HEK293 (cell line): ENCODE measurements at regions of chr7 and their contacts with region 1.

Region 1: GRCh38 chr7:143240291-143241168 is 18.7 kb downstream of the TAS2R40 start:
- H3K4me3 ChIP-seq: no peak overlapping the region
- H3K27ac ChIP-seq: no peak overlapping the region
- H3K4me1 ChIP-seq: no peaks in the 10 kb centered on the region
- CTCF ChIP-seq: peak; percentile 39; the same call in 1 of the 2 replicates

Region 2: GRCh38 chr7:143027683-143028082 is 212.8 kb before region 1 on chr7:
- CTCF ChIA-PET with region 1: no interaction called
- POLR2A ChIA-PET with region 1: no interaction called
- H3K4me3 ChIP-seq: no peak overlapping the region
- H3K27ac ChIP-seq: no peak overlapping the region
- H3K4me1 ChIP-seq: no peaks in the 10 kb centered on the region
- CTCF ChIP-seq: no peak

Region 3: DNA sequence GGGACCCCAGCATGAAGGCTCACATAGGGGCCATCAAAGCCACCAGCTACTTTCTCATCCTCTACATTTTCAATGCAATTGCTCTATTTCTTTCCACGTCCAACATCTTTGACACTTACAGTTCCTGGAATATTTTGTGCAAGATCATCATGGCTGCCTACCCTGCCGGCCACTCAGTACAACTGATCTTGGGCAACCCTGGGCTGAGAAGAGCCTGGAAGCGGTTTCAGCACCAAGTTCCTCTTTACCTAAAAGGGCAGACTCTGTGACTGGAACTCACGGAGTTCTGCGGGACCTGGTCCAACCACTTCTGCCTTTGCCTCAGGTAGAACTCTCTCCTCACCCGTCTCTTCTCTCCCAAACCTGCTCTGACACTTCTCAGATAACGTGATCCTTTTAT is 17.7 kb before region 1 on chr7:
- CTCF ChIA-PET with region 1: interaction called, 25 read pairs
- POLR2A ChIA-PET with region 1: no interaction called
- H3K4me3 ChIP-seq: no peak overlapping the region
- H3K27ac ChIP-seq: no peak overlapping the region
- H3K4me1 ChIP-seq: no peaks in the 10 kb centered on the region
- CTCF ChIP-seq: no peak

Region 4: GRCh38 chr7:143287935-143288826 is 47.7 kb after region 1 on chr7 and contains the start of gene CASP2:
- CTCF ChIA-PET with region 1: interaction called, 11 read pairs
- POLR2A ChIA-PET with region 1: interaction called, 6 read pairs
- H3K4me3 ChIP-seq: peak within 1 kb of the TSS; percentile 92
- H3K27ac ChIP-seq: peak within 1 kb of the TSS; percentile 72
- H3K4me1 ChIP-seq: no peaks in the 10 kb centered on the region
- CTCF ChIP-seq: peak; percentile 78; the same call in 1 of the 2 replicates

Region 5: GRCh38 chr7:143305423-143306070 is 65.0 kb after region 1 on chr7:
- CTCF ChIA-PET with region 1: interaction called, 49 read pairs
- POLR2A ChIA-PET with region 1: interaction called, 3 read pairs
- H3K4me3 ChIP-seq: no peak overlapping the region
- H3K27ac ChIP-seq: no peak overlapping the region
- H3K4me1 ChIP-seq: no peaks in the 10 kb centered on the region
- CTCF ChIP-seq: peak; percentile 63

Region 6: GRCh38 chr7:143416565-143417149 is 176.1 kb after region 1 on chr7:
- CTCF ChIA-PET with region 1: interaction called, 29 read pairs
- POLR2A ChIA-PET with region 1: no interaction called
- H3K4me3 ChIP-seq: no peak overlapping the region
- H3K27ac ChIP-seq: no peak overlapping the region
- H3K4me1 ChIP-seq: no peaks in the 10 kb centered on the region
- CTCF ChIP-seq: no peak; the same call in 1 of the 2 replicates